Cardiac septum (tissue), 1 donor: ENCODE measurements at regions of chr1 and their contacts with region 1.

Region 1: DNA sequence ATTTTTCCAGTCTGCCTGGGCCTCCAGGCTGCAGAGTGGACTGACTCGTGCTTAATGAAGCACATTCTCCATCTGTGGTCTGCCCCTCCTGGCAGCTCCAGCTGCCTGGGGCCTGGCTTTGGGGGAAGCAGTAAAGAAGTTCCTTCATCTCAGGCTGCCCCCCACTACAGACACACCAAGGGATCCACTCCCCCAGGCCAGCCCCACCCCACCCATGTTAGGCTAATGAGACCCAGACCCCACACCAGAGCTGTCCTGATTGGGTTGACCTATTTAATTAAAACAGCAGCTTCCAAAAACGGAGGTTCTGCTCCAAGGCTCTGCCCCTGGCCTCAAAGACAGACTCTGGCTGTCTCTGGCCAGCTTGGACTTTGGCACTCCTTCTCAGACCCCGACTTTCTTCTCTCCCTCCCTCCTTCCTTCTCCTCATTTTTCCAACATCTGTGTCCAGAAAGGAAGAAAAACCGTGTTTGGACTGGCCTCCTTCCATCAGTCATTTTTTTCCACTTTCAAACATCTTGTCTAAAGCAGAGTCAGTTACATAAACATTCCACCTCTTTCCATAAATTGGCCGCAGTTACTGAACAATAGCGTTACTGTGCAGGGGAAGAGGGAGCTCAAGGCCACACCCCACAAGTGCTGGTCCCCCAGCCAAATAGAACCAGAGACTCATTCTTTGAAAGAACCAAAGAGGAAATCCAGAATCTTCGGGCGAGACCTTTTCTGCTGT is 29.7 kb downstream of the SERTAD4 start:
- DNase-seq: no peak

Region 2: GRCh38 chr1:210294999-210295738 is 32.8 kb after region 1 on chr1:
- intact Hi-C with region 1: loop called (anchors 5 kb)
- DNase-seq: no peak

Region 3: DNA sequence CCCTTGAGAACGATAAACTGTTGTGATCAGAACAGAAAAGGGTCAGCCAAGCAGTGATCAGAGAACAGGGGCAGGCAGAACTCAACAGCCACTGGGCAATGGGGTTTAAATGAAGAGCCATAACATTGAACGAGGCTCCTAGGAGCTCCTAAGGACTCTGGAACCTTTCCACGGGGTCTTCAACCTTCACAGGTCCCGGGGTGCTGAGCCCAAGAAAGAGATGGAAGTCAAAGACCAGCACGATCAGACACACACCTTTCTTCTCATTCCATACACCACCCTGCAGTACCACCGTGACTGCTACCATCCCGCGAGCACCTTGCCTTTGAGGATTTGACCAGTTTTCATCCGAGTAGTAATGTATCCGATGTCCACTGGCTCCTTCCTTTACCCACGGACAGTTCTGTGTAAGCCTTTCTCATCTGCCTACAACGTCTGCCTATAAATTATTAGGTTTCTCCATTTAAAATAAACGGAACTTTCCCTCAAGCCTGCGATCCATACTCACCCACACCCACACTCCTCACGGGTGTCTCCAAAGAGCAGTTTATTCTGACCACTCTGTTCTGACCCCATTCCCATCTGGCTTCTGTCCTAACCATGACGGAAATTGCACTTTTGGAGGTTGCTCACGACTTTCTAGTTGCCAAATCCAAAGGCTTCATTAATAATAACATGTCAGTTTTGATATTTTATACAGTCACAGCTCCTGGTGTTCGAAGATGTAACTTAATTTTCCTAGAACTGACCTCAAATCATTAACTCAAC is 49.6 kb after region 1 on chr1:
- intact Hi-C with region 1: loop called (anchors 1 kb)
- DNase-seq: no peak